Activated naive CD4-positive, alpha-beta T cell treated with anti-CD3 and anti-CD28 coated beads, Interleukin-2, amount 10 ng/mL, durations not matched to agents 7 days and 5 days (primary cell): ENCODE measurements at regions of chr6 and their contacts with region 1.

Region 1: GRCh38 chr6:114108119-114109002 is 137.4 kb upstream of the HDAC2 start:
- DNase-seq: peak; percentile 66
- H3K4me3 Mint-ChIP-seq: no peak overlapping the region
- H3K27ac Mint-ChIP-seq: no peak overlapping the region
- H3K4me1 Mint-ChIP-seq: no peaks in the 10 kb centered on the region
- H3K27me3 Mint-ChIP-seq: peaks cover 3% of the 10 kb centered on the region

Region 2: GRCh38 chr6:113980937-113981554 is 127.3 kb before region 1 on chr6:
- CTCF ChIA-PET with region 1: interaction called, 27 read pairs
- DNase-seq: peak; percentile 30
- H3K4me3 Mint-ChIP-seq: no peak overlapping the region
- H3K27ac Mint-ChIP-seq: no peak overlapping the region
- H3K4me1 Mint-ChIP-seq: no peaks in the 10 kb centered on the region
- H3K27me3 Mint-ChIP-seq: peaks cover 4% of the 10 kb centered on the region

Region 3: GRCh38 chr6:113994918-113995342 is 113.4 kb before region 1 on chr6:
- CTCF ChIA-PET with region 1: interaction called, 33 read pairs
- DNase-seq: peak; percentile 67
- H3K4me3 Mint-ChIP-seq: no peak overlapping the region
- H3K27ac Mint-ChIP-seq: no peak overlapping the region
- H3K4me1 Mint-ChIP-seq: peaks cover 9% of the 10 kb centered on the region
- H3K27me3 Mint-ChIP-seq: peaks cover 44% of the 10 kb centered on the region

Region 4: GRCh38 chr6:114096561-114097172 is 11.7 kb before region 1 on chr6:
- CTCF ChIA-PET with region 1: interaction called, 18 read pairs
- DNase-seq: peak; percentile 22
- H3K4me3 Mint-ChIP-seq: no peak overlapping the region
- H3K27ac Mint-ChIP-seq: no peak overlapping the region
- H3K4me1 Mint-ChIP-seq: no peaks in the 10 kb centered on the region
- H3K27me3 Mint-ChIP-seq: no peaks in the 10 kb centered on the region